Calu3 (cell line): ENCODE measurements at regions of chr2 and their contacts with region 1.

Region 1: DNA sequence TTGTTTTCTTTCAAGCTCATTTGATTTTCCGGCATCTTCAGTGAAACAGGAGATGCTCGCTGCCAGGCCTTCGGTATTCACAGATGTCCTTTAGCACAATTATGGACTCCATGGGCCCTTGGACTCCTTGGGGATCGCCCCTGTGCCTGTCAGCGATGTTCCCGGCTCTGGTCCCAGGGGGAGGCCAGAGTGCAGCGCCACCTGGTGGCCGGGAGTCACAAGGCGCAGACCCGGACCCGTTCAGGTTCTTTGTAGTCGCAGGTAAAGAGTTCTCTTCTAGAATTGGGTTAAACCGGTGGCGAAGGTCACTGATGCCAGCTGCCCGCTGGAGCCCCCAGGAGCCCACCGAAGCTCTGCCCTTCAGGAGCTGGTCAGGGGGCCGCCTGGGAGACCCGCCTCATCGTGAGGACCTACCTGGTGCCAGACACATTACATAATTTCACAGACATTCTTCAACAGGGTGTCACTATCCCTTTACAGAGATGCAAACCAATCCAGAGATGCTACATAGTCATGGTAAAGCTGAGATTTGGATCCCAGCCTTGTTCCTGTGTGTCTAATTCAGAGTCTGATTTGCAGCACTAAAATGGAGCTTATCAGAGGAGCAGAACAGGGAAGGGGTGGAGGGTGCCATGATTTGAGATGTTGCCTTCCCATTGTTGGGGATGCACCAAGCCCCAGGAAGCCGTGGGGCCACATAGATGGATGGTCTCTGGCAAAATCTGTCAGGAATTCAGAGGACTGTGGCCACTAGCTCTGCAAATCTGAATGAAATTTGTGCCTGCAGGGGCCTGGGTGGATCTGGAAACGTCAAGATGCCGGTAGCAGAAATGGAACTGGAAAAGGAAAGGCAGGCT is 6.0 kb upstream of the INPP5D start:
- DNase-seq: peak; percentile 83
- H3K4me3 Mint-ChIP-seq: no peak overlapping the region
- H3K27ac Mint-ChIP-seq: no peak overlapping the region
- H3K4me1 Mint-ChIP-seq: peaks cover 5% of the 10 kb centered on the region
- H3K27me3 Mint-ChIP-seq: peaks cover 50% of the 10 kb centered on the region
- CTCF ChIP-seq: peak; percentile 96

Region 2: GRCh38 chr2:232854082-232854481 is 200.1 kb before region 1 on chr2:
- CTCF ChIA-PET with region 1: interaction called, 4 read pairs
- intact Hi-C with region 1: loop called (anchors 10 kb)
- DNase-seq: peak; percentile 63
- H3K4me3 Mint-ChIP-seq: no peak overlapping the region
- H3K27ac Mint-ChIP-seq: peak overlapping the region; percentile 60
- H3K4me1 Mint-ChIP-seq: peaks cover 37% of the 10 kb centered on the region
- H3K27me3 Mint-ChIP-seq: no peaks in the 10 kb centered on the region
- CTCF ChIP-seq: no peak

Region 3: DNA sequence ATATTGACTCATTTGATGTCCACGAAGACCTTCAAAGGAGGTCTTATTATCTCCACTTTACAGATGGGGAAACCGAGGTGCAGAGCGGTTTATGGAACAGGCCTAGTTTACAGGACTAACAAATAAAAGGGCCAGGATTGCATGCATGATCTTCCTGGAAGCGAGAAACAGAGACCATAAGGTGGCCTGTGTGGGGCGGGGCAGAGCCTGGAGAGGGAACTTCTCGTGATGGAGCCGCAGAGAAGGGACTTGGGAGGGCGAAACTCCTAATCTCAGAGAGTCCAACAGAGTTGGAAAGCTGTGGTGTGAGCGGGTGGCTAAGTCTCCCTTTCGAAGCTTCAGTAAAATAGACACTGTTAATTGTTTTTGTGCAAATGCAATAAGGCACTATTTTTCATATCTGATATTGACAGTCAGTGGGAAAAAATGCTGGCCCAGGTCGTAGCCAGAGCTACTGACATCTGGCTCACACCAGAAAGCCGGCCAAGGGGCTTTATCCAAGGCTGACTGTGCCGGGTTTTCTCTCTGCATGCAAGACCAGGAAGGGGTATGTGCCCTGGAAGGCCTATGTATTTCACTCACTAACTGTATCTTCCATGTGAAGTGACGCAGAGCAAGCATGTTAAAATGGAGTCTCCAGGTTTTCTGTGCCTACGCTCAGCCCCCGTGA is 10.5 kb after region 1 on chr2:
- CTCF ChIA-PET with region 1: no interaction called
- intact Hi-C with region 1: no loop called
- DNase-seq: no peak
- H3K4me3 Mint-ChIP-seq: no peak overlapping the region
- H3K27ac Mint-ChIP-seq: no peak overlapping the region
- H3K4me1 Mint-ChIP-seq: no peaks in the 10 kb centered on the region
- H3K27me3 Mint-ChIP-seq: peaks cover 15% of the 10 kb centered on the region
- CTCF ChIP-seq: no peak

Region 4: DNA sequence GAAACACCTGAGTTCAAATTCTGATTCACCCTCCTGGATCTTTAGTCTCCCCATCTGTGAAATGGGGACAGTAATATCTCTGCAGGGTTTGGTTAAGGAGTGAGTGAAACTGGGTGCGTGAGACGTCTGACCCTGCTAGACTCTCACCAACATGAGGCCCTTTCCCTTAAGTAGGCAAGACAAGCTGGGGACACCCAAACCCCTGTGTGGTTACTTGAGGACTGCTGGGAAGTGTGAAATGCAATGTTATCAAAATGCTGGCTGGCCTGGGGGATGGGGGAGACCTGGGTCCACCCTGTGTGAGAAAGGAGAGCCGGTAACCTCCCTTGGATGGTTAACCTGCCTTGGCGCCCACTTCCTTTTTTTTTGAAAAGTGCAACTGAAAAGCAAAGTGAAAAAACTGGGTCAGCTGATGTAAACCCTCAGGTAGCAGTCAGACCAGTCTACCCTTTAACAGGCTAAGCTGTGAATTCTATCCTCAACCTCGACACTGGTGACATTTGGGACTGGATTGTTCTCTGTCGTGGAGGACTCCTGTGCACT is 88.3 kb after region 1 on chr2:
- CTCF ChIA-PET with region 1: no interaction called
- intact Hi-C with region 1: no loop called
- DNase-seq: no peak
- H3K4me3 Mint-ChIP-seq: no peak overlapping the region
- H3K27ac Mint-ChIP-seq: no peak overlapping the region
- H3K4me1 Mint-ChIP-seq: no peaks in the 10 kb centered on the region
- H3K27me3 Mint-ChIP-seq: peaks cover 67% of the 10 kb centered on the region
- CTCF ChIP-seq: no peak

Region 5: DNA sequence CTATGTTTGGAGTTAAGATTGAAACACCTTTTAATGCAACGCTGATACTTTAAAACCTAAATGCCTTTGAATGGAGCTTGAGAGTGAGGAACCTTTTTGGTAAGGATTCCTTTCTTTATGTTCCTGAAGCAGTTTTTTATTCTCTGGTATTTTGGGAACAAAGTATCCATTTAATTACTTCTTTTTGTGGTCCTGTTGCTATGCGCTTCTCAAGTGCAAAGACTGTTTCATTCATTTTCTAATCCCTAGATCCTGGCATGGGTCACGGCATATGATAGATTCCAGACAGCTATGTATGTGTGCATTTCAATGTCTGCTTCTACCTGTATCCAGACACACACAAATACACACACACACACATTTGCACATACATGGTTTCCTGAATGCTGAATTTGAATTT is 891.0 kb after region 1 on chr2:
- CTCF ChIA-PET with region 1: no interaction called
- intact Hi-C with region 1: no loop called
- DNase-seq: no peak
- H3K4me3 Mint-ChIP-seq: no peak overlapping the region
- H3K27ac Mint-ChIP-seq: no peak overlapping the region
- H3K4me1 Mint-ChIP-seq: peaks cover 16% of the 10 kb centered on the region
- H3K27me3 Mint-ChIP-seq: no peaks in the 10 kb centered on the region
- CTCF ChIP-seq: no peak